ENCODE measurements at regions of chr1 and their contacts with region 1.

Region 1: DNA sequence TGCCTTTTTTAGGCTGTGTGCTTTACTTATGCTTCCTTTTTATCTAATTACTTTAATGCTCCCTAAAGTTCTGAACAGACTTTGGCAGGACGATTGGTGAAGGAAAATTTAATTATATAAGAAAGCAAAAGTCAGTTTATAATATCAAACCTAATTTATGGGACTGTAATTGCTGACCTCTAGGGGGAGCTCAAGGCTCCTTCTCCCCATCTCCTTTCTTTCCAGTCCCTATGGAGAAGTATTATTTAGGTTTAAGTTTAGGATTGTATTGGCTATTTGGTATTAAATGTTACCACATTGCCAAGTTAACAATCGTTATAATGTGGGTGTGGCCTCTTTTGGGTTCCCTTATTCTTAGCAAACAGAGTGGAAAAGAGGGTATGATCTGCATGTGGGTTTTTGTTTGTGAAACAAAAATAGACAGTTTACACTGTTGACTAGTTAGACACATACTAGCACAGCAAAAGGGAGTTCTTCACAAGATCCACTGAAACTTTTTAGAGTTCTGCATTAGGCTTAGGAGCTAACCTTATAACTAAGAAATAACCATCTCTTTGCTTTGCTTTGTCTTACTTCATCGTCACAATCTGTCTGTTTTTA is 48.2 kb upstream of the TNFSF4 start:
- DNase-seq: peak; percentile 52
- H3K4me3 ChIP-seq: no peak overlapping the region
- H3K27ac ChIP-seq: peak overlapping the region; percentile 22
- H3K27me3 ChIP-seq: no peaks in the 10 kb centered on the region
- CTCF ChIP-seq: peak; percentile 82

Region 2: DNA sequence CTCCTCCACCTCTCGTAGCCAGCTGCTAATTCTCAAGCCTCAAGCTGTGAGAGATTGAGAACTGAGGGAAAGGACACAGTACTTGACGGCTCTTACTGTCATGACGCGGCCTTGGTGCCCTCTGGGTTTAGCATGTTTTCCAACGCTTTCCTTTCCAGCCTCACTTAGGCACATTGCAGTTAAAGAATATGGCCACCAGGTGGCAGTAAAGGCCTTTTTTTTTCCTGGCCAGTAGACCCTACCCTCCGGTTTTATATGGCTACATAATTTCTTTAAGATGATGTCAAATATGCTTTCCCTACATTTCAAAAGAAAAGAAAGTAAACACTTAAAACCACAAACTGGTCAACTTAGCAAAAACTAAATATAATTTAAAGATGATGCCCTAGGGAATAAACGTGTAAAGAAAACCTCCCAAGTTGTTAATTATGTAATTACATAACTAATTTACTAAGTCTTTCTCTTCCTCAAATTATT is 165.1 kb after region 1 on chr1:
- in situ Hi-C with region 1: loop called (anchors 25 kb)
- DNase-seq: peak; percentile 80
- H3K4me3 ChIP-seq: no peak overlapping the region
- H3K27ac ChIP-seq: no peak overlapping the region
- H3K27me3 ChIP-seq: no peaks in the 10 kb centered on the region
- CTCF ChIP-seq: peak; percentile 76

Measured in brain microvascular endothelial cell (primary cell).